MCF 10A (cell line): ENCODE measurements at regions of chr5 and their contacts with region 1.

Region 1: DNA sequence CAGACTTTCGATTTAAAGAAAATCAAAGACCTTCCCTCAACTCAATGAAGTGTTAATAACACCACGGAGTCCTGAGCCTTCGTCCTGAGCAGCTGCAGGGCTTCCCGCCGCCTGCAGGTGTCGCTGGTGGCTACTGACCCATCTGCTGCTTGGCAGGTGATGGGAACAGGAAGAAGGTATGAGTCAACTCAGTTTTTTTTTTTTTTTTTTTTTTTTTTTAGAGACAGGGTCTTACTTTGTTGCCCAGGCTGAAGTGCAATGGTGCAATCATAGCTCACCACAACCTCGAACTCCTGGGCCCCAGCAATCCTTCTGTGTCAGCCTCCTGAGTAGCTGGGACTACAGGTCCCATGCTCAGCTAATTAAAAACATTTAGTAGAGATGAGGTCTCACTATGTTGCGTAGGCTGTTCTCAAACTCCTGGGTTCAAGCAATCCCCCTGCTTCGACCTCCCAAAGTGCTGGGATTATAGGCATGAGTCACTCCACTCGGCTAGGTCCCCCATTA is 185.7 kb upstream of the IL12B start:
- DNase-seq: peak; percentile 88
- H3K4me3 Mint-ChIP-seq: no peak overlapping the region
- H3K27ac Mint-ChIP-seq: no peak overlapping the region
- H3K4me1 Mint-ChIP-seq: peaks cover 19% of the 10 kb centered on the region
- H3K27me3 Mint-ChIP-seq: no peaks in the 10 kb centered on the region
- CTCF ChIP-seq: peak; percentile 97

Region 2: DNA sequence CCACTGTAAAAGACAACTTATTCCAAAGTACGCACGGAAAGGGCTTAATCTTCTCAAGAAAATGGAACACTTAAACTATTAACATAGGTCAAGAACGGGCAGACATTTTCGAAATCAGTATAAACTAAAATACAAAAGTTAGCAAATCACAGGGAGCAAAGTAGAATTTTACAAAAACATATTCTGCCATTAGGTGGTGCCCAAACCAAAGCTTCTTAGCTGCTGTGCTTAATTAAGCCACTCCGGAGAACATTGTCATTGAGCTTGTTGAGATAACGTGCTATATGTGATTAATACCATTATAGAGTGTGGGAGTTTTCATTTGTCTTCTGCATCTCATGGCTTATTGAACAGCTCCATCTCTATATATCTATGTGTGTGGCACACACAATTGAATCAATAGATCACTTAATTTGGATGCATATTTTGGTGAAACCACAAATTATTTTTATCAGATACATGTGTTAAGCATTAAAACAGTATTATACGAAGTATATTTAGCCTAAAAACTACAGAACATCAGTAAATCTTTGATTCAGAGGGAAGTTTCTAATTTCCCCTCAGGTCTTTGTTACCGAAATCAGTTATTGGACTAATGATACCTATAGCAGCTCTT is 229.4 kb before region 1 on chr5:
- CTCF ChIA-PET with region 1: interaction called, 6 read pairs
- POLR2A ChIA-PET with region 1: no interaction called
- intact Hi-C with region 1: loop called (anchors 2 kb)
- DNase-seq: peak; percentile 62
- H3K4me3 Mint-ChIP-seq: no peak overlapping the region
- H3K27ac Mint-ChIP-seq: no peak overlapping the region
- H3K4me1 Mint-ChIP-seq: no peaks in the 10 kb centered on the region
- H3K27me3 Mint-ChIP-seq: no peaks in the 10 kb centered on the region
- CTCF ChIP-seq: peak; percentile 67

Region 3: GRCh38 chr5:159324102-159324760 is 191.7 kb before region 1 on chr5:
- CTCF ChIA-PET with region 1: no interaction called
- POLR2A ChIA-PET with region 1: no interaction called
- intact Hi-C with region 1: no loop called
- DNase-seq: peak; percentile 35
- H3K4me3 Mint-ChIP-seq: no peak overlapping the region
- H3K27ac Mint-ChIP-seq: no peak overlapping the region
- H3K4me1 Mint-ChIP-seq: no peaks in the 10 kb centered on the region
- H3K27me3 Mint-ChIP-seq: no peaks in the 10 kb centered on the region
- CTCF ChIP-seq: no peak

Region 4: DNA sequence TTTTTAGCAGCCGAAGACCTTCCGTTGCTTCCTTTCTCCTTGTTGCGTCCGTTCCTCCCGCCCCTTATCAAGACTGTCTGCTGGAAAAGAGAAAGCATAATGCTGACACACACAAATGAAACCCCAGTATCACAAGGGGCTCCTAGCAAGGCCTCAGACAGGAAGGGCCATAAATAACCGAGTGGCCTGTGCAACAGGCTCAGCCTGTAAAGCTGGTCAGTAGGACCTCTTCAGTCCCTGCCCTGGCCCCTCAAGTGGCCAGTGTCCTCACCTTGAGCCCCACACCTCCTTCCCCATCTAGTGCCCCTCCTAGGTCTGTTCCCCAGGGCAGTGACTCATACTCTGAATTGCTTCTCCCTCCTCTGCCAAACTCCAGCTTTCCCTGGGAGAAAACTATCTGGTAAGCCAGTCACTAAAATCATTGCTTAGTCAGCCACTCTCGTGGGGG is 11.1 kb before region 1 on chr5:
- CTCF ChIA-PET with region 1: interaction called, 40 read pairs
- POLR2A ChIA-PET with region 1: no interaction called
- intact Hi-C with region 1: no loop called
- DNase-seq: peak; percentile 74
- H3K4me3 Mint-ChIP-seq: no peak overlapping the region
- H3K27ac Mint-ChIP-seq: no peak overlapping the region
- H3K4me1 Mint-ChIP-seq: peaks cover 6% of the 10 kb centered on the region
- H3K27me3 Mint-ChIP-seq: no peaks in the 10 kb centered on the region
- CTCF ChIP-seq: no peak

Region 5: DNA sequence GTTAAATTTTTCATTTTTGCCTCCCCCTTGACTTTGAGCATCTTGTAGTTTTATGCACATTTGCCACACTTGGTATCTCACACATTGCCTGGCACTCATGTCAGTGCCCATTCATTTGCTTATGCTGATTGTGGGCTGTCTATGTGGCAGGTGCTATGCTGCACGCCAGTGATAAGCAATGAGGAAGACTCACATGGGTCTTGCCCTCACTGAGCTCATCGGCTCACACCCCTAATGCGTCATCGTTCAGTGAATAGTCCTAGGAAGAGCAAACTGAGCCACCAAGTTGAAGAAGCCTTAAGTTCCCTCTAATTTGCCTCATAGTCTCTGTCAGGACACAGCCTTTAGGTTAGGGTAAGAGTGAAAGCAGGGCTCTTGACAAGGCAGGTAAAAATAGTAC is 23.7 kb after region 1 on chr5:
- CTCF ChIA-PET with region 1: interaction called, 20 read pairs
- POLR2A ChIA-PET with region 1: no interaction called
- intact Hi-C with region 1: no loop called
- DNase-seq: no peak
- H3K4me3 Mint-ChIP-seq: no peak overlapping the region
- H3K27ac Mint-ChIP-seq: no peak overlapping the region
- H3K4me1 Mint-ChIP-seq: peaks cover 7% of the 10 kb centered on the region
- H3K27me3 Mint-ChIP-seq: no peaks in the 10 kb centered on the region
- CTCF ChIP-seq: no peak

Region 6: GRCh38 chr5:159732220-159732619 is 216.3 kb after region 1 on chr5:
- CTCF ChIA-PET with region 1: interaction called, 3 read pairs
- POLR2A ChIA-PET with region 1: no interaction called
- intact Hi-C with region 1: loop called (anchors 10 kb)
- DNase-seq: no peak
- H3K4me3 Mint-ChIP-seq: no peak overlapping the region
- H3K27ac Mint-ChIP-seq: no peak overlapping the region
- H3K4me1 Mint-ChIP-seq: peaks cover 9% of the 10 kb centered on the region
- H3K27me3 Mint-ChIP-seq: peaks cover 13% of the 10 kb centered on the region
- CTCF ChIP-seq: no peak

Region 7: GRCh38 chr5:159905496-159905895 is 389.5 kb after region 1 on chr5:
- CTCF ChIA-PET with region 1: interaction called, 12 read pairs
- POLR2A ChIA-PET with region 1: no interaction called
- intact Hi-C with region 1: no loop called
- DNase-seq: peak; percentile 96
- H3K4me3 Mint-ChIP-seq: no peak overlapping the region
- H3K27ac Mint-ChIP-seq: peak overlapping the region; percentile 15
- H3K4me1 Mint-ChIP-seq: peaks cover 60% of the 10 kb centered on the region
- H3K27me3 Mint-ChIP-seq: no peaks in the 10 kb centered on the region
- CTCF ChIP-seq: no peak

Region 8: GRCh38 chr5:159965031-159965837 is 449.3 kb after region 1 on chr5:
- CTCF ChIA-PET with region 1: interaction called, 22 read pairs
- POLR2A ChIA-PET with region 1: no interaction called
- intact Hi-C with region 1: loop called (anchors 1 kb)
- DNase-seq: peak; percentile 86
- H3K4me3 Mint-ChIP-seq: no peak overlapping the region
- H3K27ac Mint-ChIP-seq: no peak overlapping the region
- H3K4me1 Mint-ChIP-seq: peaks cover 7% of the 10 kb centered on the region
- H3K27me3 Mint-ChIP-seq: no peaks in the 10 kb centered on the region
- CTCF ChIP-seq: peak; percentile 87